ENCODE measurements at regions of chr6 and their contacts with region 1.

Region 1: DNA sequence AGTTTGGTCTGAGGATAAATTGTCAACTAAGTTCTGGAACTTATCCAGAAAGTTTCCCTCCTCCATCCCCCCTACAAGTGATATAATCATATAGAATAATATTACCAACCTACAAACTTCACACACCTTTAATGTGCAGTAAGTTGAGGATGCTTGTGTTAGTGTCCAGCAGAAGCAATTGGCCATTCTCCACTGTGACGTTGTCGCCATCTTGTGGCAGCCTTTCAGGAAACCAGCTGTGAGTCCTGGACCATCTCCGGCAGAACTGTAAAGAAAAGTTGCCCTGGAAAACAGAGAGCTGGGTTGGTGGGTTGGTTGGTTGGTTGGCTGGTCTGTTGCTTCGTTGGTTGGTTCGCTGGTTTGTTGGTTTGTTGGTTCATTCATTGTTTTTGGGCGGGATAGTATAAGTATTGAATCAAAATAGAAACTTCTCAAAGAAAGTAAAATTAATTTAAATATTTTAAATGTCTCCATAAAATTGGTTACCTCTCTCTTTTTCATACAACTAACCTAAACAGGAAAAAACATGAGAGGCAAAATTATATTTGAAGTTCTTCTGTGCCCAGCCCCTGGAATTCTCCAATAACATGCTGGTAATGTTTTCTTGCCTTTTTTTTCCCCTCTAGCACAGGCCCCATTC is 127.5 kb downstream of the PKHD1 start:
- DNase-seq: peak; percentile 38
- ATAC-seq: peak; percentile 97
- H3K4me3 ChIP-seq: no peak overlapping the region
- H3K27ac ChIP-seq: no peak overlapping the region
- H3K4me1 ChIP-seq: no peaks in the 10 kb centered on the region
- H3K27me3 ChIP-seq: peaks cover 0 to 6% of the 10 kb centered on the region in 2 experiments; a peak in 1 of 4 replicates
- CTCF ChIP-seq: peak; percentile 85 to 93 (median 85)
- EP300 ChIP-seq: no peak
- POLR2A ChIP-seq: no peak
- RAD21 ChIP-seq: peak; percentile 100

Region 2: DNA sequence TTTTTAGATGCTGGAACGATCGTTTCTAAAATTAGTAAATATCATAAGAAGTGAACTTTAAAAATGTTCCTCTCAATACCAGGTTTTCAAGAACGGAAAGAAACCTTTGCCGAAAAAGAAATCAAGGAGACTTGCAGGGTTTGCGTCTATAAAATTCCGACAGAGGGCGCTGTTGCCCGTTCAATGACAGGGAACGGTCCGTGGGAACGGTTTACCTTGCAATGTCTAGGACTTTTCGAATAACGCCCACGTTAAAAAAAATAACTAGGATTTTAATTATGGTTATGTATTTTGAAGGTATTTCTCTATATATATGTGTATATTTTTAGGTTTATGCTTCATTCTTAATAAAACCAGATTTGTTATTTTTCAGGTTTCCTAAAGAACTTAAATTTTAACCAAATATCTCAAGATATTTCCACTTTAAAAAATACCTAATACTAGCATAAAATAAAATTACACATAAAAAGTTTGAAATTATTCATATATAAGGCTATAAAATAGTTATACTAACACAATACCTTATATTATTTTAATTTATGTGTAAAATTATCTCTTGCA is 1143.7 kb before region 1 on chr6:
- CTCF ChIA-PET with region 1: interaction called, 4 read pairs
- POLR2A ChIA-PET with region 1: no interaction called
- RAD21 ChIA-PET with region 1: no interaction called
- SMC1A ChIA-PET with region 1: no interaction called
- in situ Hi-C with region 1: loop called (anchors 10 kb)
- intact Hi-C with region 1: loop called (anchors 2 kb)
- DNase-seq: peak; percentile 19
- ATAC-seq: peak; percentile 85
- H3K4me3 ChIP-seq: peak overlapping the region; percentile 75
- H3K27ac ChIP-seq: no peak overlapping the region
- H3K4me1 ChIP-seq: no peaks in the 10 kb centered on the region
- H3K27me3 ChIP-seq: peaks cover 2 to 20% of the 10 kb centered on the region in 2 experiments; a peak in 3 of 4 replicates
- CTCF ChIP-seq: peak; percentile 68 to 92 (median 79)
- EP300 ChIP-seq: no peak
- POLR2A ChIP-seq: no peak
- RAD21 ChIP-seq: peak; percentile 92

Region 3: GRCh38 chr6:51855310-51856082 is 104.4 kb before region 1 on chr6:
- CTCF ChIA-PET with region 1: interaction called, 73 read pairs
- POLR2A ChIA-PET with region 1: no interaction called
- RAD21 ChIA-PET with region 1: interaction called, 37 read pairs
- SMC1A ChIA-PET with region 1: interaction called, 83 read pairs
- in situ Hi-C with region 1: loop called (anchors 5 kb)
- intact Hi-C with region 1: loop called (anchors 1 kb)
- DNase-seq: peak; percentile 11
- ATAC-seq: peak; percentile 96
- H3K4me3 ChIP-seq: no peak overlapping the region
- H3K27ac ChIP-seq: no peak overlapping the region
- H3K4me1 ChIP-seq: no peaks in the 10 kb centered on the region
- H3K27me3 ChIP-seq: no peaks in the 10 kb centered on the region
- CTCF ChIP-seq: peak; percentile 59 to 67 (median 61)
- EP300 ChIP-seq: no peak
- POLR2A ChIP-seq: no peak
- RAD21 ChIP-seq: peak; percentile 93

Region 4: DNA sequence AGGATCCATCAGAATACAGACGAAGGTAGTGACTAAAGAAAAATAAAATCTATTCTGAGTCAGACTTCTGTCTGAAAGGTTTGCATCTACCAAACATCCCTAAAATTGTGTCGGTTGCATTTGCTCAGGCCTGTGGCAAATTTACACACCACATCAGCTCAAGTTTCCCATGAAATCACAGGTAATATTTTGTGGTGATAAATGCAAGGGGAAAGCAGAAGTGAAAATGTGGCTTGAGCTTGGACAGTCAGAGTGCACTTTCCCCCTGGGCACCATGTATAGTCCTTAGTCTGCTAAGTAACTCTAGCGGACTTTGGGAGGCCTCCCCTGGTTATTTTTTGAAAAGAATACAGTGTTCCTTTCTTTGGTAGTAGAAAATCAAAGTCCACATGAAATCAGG is 31.5 kb before region 1 on chr6:
- CTCF ChIA-PET with region 1: interaction called, 16 read pairs
- POLR2A ChIA-PET with region 1: no interaction called
- RAD21 ChIA-PET with region 1: no interaction called
- SMC1A ChIA-PET with region 1: interaction called, 10 read pairs
- in situ Hi-C with region 1: no loop called
- intact Hi-C with region 1: no loop called
- DNase-seq: peak; percentile 40
- ATAC-seq: peak; percentile 86
- H3K4me3 ChIP-seq: no peak overlapping the region
- H3K27ac ChIP-seq: no peak overlapping the region
- H3K4me1 ChIP-seq: peaks cover 18% of the 10 kb centered on the region
- H3K27me3 ChIP-seq: no peaks in the 10 kb centered on the region
- CTCF ChIP-seq: no peak
- EP300 ChIP-seq: peak; percentile 63 to 71
- POLR2A ChIP-seq: no peak
- RAD21 ChIP-seq: no peak

Region 5: DNA sequence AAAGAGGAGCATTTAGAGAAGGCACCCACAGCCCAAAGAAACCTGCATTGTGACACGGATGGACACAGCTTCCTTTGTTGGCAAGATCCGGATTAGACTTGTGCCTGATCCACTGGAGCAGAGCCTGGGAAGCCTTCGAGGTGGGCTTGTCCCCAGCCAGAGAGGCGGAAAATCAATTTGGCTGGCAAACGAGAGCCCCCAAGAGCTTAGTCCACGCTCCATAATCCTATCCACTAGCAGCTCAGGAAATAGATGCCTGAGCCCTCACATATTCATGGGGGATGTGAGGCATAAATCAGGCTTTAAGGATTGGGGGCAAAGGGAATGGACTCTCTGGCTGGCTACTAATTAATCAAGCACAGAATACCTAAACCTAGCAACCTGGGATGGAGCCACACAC is 10.4 kb before region 1 on chr6:
- CTCF ChIA-PET with region 1: interaction called, 26 read pairs
- POLR2A ChIA-PET with region 1: no interaction called
- RAD21 ChIA-PET with region 1: interaction called, 7 read pairs
- SMC1A ChIA-PET with region 1: interaction called, 7 read pairs
- in situ Hi-C with region 1: no loop called
- intact Hi-C with region 1: no loop called
- DNase-seq: no peak
- ATAC-seq: no peak
- H3K4me3 ChIP-seq: no peak overlapping the region
- H3K27ac ChIP-seq: no peak overlapping the region
- H3K4me1 ChIP-seq: no peaks in the 10 kb centered on the region
- H3K27me3 ChIP-seq: no peaks in the 10 kb centered on the region
- CTCF ChIP-seq: no peak
- EP300 ChIP-seq: no peak
- POLR2A ChIP-seq: no peak
- RAD21 ChIP-seq: no peak

Region 6: GRCh38 chr6:52020945-52021570 is 61.2 kb after region 1 on chr6:
- CTCF ChIA-PET with region 1: interaction called, 121 read pairs
- POLR2A ChIA-PET with region 1: no interaction called
- RAD21 ChIA-PET with region 1: interaction called, 14 read pairs
- SMC1A ChIA-PET with region 1: interaction called, 25 read pairs
- in situ Hi-C with region 1: no loop called
- intact Hi-C with region 1: loop called (anchors 2 kb)
- DNase-seq: no peak
- ATAC-seq: peak; percentile 52; the same call in 2 of the 3 replicates
- H3K4me3 ChIP-seq: no peak overlapping the region
- H3K27ac ChIP-seq: no peak overlapping the region
- H3K4me1 ChIP-seq: no peaks in the 10 kb centered on the region
- H3K27me3 ChIP-seq: no peaks in the 10 kb centered on the region; a peak in 1 of 4 replicates
- CTCF ChIP-seq: peak; percentile 45 to 70 (median 48); a peak in 4 of 6 replicates
- EP300 ChIP-seq: no peak
- POLR2A ChIP-seq: no peak
- RAD21 ChIP-seq: peak; percentile 93

Region 7: DNA sequence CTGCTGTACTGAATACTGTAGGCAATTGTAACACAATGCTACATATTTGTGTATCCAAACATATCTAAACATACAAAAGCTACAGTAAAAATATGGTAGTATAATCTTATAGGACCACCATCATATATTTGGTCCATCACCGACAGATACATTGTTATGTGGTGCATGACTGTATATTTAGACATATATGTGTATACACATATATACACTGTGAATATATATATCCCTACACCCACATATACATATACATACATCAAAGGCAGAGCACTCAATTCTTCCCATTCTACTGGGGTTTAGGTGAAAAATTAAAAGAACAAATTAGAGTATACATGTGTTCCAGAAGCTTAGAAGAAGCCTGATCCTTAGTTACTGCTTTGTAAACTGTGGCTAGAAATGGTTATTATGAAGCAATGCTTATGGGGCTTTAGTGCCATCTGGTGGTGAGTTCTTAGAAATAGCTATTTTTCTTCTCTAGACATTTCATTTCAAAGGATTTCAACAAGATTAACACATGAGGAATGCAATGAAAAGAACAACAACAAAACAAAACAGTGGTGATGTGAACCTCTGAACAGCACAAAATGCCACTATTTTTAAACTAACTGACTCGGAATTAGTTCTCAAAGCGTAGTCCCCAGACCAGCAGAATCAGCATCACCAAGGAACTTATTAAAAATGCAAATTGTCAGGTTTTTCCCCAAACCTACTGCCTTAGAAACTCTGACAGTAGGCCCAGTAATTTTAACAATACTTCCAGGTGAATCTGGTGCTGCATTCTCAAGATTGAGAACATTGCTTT is 89.6 kb after region 1 on chr6:
- CTCF ChIA-PET with region 1: interaction called, 58 read pairs
- POLR2A ChIA-PET with region 1: no interaction called
- RAD21 ChIA-PET with region 1: interaction called, 17 read pairs
- SMC1A ChIA-PET with region 1: interaction called, 5 read pairs
- in situ Hi-C with region 1: no loop called
- intact Hi-C with region 1: no loop called
- DNase-seq: peak; percentile 11
- ATAC-seq: peak; percentile 75
- H3K4me3 ChIP-seq: no peak overlapping the region
- H3K27ac ChIP-seq: no peak overlapping the region
- H3K4me1 ChIP-seq: no peaks in the 10 kb centered on the region
- H3K27me3 ChIP-seq: peaks cover 0 to 8% of the 10 kb centered on the region in 2 experiments; a peak in 2 of 4 replicates
- CTCF ChIP-seq: peak; percentile 56 to 70 (median 62)
- EP300 ChIP-seq: no peak
- POLR2A ChIP-seq: no peak
- RAD21 ChIP-seq: peak; percentile 67

Region 8: DNA sequence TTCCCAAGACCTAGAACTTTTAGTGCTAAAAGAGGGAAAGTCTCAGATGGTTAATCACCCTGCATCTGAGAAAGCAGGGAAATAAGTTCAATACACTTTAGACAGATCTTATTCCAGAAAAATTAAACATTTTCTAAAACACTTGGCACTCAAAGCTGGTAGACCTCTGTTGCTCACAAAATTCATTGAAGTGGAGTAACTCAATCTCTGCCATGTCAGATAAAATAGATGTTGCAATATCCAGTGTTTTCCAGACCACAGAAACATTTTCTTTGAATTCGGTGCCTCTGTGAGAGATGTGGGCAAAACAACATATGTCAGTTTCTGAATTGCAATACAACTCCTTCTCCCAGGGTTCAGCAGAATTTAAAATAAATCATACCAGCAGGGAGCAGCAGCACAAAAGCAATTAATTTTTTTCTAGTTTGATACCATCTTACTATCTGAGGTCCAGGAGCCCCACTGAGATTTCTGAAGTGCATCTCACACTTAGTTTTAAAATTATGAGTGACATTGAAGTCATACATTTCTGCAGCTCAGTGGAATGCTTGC is 138.8 kb after region 1 on chr6:
- CTCF ChIA-PET with region 1: no interaction called
- POLR2A ChIA-PET with region 1: no interaction called
- RAD21 ChIA-PET with region 1: no interaction called
- SMC1A ChIA-PET with region 1: no interaction called
- in situ Hi-C with region 1: no loop called
- intact Hi-C with region 1: no loop called
- DNase-seq: no peak
- ATAC-seq: no peak
- H3K4me3 ChIP-seq: no peak overlapping the region
- H3K27ac ChIP-seq: no peak overlapping the region
- H3K4me1 ChIP-seq: no peaks in the 10 kb centered on the region
- H3K27me3 ChIP-seq: 0 out of 4 replicates have a peak, but pooled peaks cover 0 to 7% of the 10 kb centered on the region in 2 experiments
- CTCF ChIP-seq: peak in 1 of 3 experiments; percentile 18; a peak in 1 of 6 replicates
- EP300 ChIP-seq: no peak
- POLR2A ChIP-seq: no peak
- RAD21 ChIP-seq: no peak; the same call in 1 of the 2 replicates

Region 9: GRCh38 chr6:52186480-52186879 is 226.6 kb after region 1 on chr6:
- CTCF ChIA-PET with region 1: no interaction called
- POLR2A ChIA-PET with region 1: no interaction called
- RAD21 ChIA-PET with region 1: no interaction called
- SMC1A ChIA-PET with region 1: no interaction called
- in situ Hi-C with region 1: no loop called
- intact Hi-C with region 1: no loop called
- DNase-seq: no peak
- ATAC-seq: peak; percentile 65
- H3K4me3 ChIP-seq: no peak overlapping the region
- H3K27ac ChIP-seq: peak overlapping the region; percentile 33; the same call in 1 of the 2 replicates
- H3K4me1 ChIP-seq: peaks cover 30% of the 10 kb centered on the region
- H3K27me3 ChIP-seq: peaks cover 0 to 2% of the 10 kb centered on the region in 2 experiments; a peak in 2 of 4 replicates
- CTCF ChIP-seq: no peak
- EP300 ChIP-seq: no peak; a peak in 2 of 4 replicates
- POLR2A ChIP-seq: no peak
- RAD21 ChIP-seq: no peak